K562 (cell line): ENCODE measurements at regions of chr4 and their contacts with region 1.

Region 1: GRCh38 chr4:163484906-163485305 is 9.6 kb upstream of the TMA16 start:
- DNase-seq: peak; percentile 55 to 82 (median 64)
- ATAC-seq: peak; percentile 91
- H3K4me3 ChIP-seq: no peak overlapping the region
- H3K27ac ChIP-seq: no peak overlapping the region
- H3K4me1 ChIP-seq: peaks cover 0 to 2% of the 10 kb centered on the region in 2 experiments; a peak in 1 of 5 replicates
- H3K27me3 ChIP-seq: no peaks in the 10 kb centered on the region
- CTCF ChIP-seq: peak; percentile 58 to 75 (median 64)
- EP300 ChIP-seq: no peak
- POLR2A ChIP-seq: no peak
- RAD21 ChIP-seq: peak; percentile 72

Region 2: GRCh38 chr4:163544407-163545038 is 59.6 kb after region 1 on chr4:
- CTCF ChIA-PET with region 1: interaction called, 30 read pairs
- POLR2A ChIA-PET with region 1: interaction called, 3 read pairs
- in situ Hi-C with region 1: no loop called
- intact Hi-C with region 1: loop called (anchors 1 kb)
- DNase-seq: peak; percentile 70 to 79 (median 74)
- ATAC-seq: peak; percentile 95
- H3K4me3 ChIP-seq: no peak overlapping the region
- H3K27ac ChIP-seq: no peak overlapping the region
- H3K4me1 ChIP-seq: no peaks in the 10 kb centered on the region
- H3K27me3 ChIP-seq: no peaks in the 10 kb centered on the region
- CTCF ChIP-seq: peak; percentile 80 to 95 (median 85)
- EP300 ChIP-seq: no peak
- POLR2A ChIP-seq: no peak
- RAD21 ChIP-seq: peak; percentile 54 to 63

Region 3: DNA sequence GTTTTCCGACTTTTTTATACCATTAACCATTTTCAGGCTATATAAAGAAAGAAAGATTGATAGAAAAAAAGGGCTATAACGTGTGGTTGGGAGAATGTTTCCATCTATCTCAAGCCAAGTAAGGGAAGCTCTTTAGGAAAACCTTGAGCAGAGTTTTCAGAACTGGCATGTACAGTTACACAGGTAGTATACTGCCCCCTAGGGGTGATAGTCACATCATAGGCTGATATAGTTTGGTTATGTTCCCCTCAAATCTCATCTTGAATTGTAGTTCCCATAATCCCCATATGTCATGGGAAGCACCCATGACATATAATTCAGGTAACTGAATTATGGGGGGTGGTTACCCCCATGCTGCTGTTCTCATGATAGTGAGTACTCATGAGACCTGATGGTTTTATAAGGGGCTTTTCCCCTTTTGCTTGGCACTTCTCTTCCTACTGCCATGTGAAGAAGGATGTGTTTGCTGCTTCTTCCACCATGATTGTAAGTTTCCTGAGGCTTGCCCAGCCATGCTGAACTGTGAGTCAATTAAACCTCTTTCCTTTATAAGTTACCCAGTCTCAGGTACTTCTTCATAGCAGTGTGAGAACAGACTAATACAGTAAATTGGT is 196.4 kb after region 1 on chr4:
- CTCF ChIA-PET with region 1: no interaction called
- POLR2A ChIA-PET with region 1: no interaction called
- in situ Hi-C with region 1: no loop called
- intact Hi-C with region 1: loop called (anchors 2 kb)
- DNase-seq: peak; percentile 26 to 46 (median 40)
- ATAC-seq: peak; percentile 78
- H3K4me3 ChIP-seq: no peak overlapping the region
- H3K27ac ChIP-seq: no peak overlapping the region
- H3K4me1 ChIP-seq: no peaks in the 10 kb centered on the region
- H3K27me3 ChIP-seq: no peaks in the 10 kb centered on the region
- CTCF ChIP-seq: peak in 2 of 3 experiments; percentile 35 to 41; a peak in 3 of 6 replicates
- EP300 ChIP-seq: no peak
- POLR2A ChIP-seq: no peak
- RAD21 ChIP-seq: peak in 1 of 2 experiments; percentile 58; a peak in 3 of 4 replicates

Region 4: DNA sequence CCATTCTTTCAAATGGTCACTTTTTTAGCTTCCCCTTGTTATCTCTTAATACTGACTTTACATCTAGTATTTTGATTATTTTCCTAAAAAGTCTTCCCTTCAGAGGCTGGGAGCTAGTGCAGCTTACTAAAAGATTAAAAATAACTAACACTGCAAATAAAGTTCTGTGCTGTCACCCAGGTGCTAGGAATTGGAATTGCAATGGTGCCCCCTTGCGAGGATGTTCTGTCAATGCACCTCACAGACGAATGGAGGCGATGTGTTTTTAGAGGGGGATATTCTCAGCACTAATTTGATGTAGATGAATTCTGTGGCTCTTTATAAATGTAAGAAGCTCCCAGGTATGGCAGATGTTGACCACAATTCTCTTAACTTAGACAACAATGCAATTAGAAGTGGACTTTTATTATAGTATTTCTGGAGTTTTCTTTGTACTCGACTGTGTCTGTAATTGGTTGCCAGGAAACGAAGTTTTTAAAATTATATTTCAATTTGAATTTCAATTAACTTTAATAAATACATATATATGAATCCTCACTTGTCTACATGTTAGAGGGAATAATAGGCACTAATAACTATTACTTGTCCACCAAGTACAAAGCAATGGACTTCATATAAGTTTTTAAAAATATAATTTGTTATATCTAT is 1247.0 kb after region 1 on chr4:
- CTCF ChIA-PET with region 1: no interaction called
- POLR2A ChIA-PET with region 1: no interaction called
- in situ Hi-C with region 1: no loop called
- intact Hi-C with region 1: loop called (anchors 1 kb)
- DNase-seq: peak; percentile 57 to 67 (median 64)
- ATAC-seq: peak; percentile 79
- H3K4me3 ChIP-seq: no peak overlapping the region
- H3K27ac ChIP-seq: no peak overlapping the region
- H3K4me1 ChIP-seq: no peaks in the 10 kb centered on the region
- H3K27me3 ChIP-seq: no peaks in the 10 kb centered on the region
- CTCF ChIP-seq: peak; percentile 70 to 82 (median 77)
- EP300 ChIP-seq: no peak
- POLR2A ChIP-seq: no peak
- RAD21 ChIP-seq: peak; percentile 73 to 81

Region 5: GRCh38 chr4:164748375-164748774 is 1263.5 kb after region 1 on chr4:
- CTCF ChIA-PET with region 1: no interaction called
- POLR2A ChIA-PET with region 1: no interaction called
- in situ Hi-C with region 1: no loop called
- intact Hi-C with region 1: loop called (anchors 5 kb)
- DNase-seq: peak in 3 of 4 experiments; percentile 10 to 24 (median 16)
- ATAC-seq: no peak
- H3K4me3 ChIP-seq: no peak overlapping the region
- H3K27ac ChIP-seq: no peak overlapping the region
- H3K4me1 ChIP-seq: no peaks in the 10 kb centered on the region; a peak in 1 of 5 replicates
- H3K27me3 ChIP-seq: no peaks in the 10 kb centered on the region
- CTCF ChIP-seq: peak in 1 of 3 experiments; percentile 53; a peak in 2 of 6 replicates
- EP300 ChIP-seq: no peak
- POLR2A ChIP-seq: no peak
- RAD21 ChIP-seq: peak; percentile 29 to 52